PC-9 (cell line): ENCODE measurements at regions of chr21 and their contacts with region 1.

Region 1: GRCh38 chr21:35256467-35256988 is 207.4 kb upstream of the RUNX1 start:
- DNase-seq: peak; percentile 86 to 98
- H3K4me3 ChIP-seq: peak overlapping the region; percentile 42; the same call in 1 of the 2 replicates
- H3K27ac ChIP-seq: peak overlapping the region; percentile 99
- H3K4me1 ChIP-seq: peaks cover 37% of the 10 kb centered on the region
- H3K27me3 ChIP-seq: no peaks in the 10 kb centered on the region
- CTCF ChIP-seq: no peak

Region 2: DNA sequence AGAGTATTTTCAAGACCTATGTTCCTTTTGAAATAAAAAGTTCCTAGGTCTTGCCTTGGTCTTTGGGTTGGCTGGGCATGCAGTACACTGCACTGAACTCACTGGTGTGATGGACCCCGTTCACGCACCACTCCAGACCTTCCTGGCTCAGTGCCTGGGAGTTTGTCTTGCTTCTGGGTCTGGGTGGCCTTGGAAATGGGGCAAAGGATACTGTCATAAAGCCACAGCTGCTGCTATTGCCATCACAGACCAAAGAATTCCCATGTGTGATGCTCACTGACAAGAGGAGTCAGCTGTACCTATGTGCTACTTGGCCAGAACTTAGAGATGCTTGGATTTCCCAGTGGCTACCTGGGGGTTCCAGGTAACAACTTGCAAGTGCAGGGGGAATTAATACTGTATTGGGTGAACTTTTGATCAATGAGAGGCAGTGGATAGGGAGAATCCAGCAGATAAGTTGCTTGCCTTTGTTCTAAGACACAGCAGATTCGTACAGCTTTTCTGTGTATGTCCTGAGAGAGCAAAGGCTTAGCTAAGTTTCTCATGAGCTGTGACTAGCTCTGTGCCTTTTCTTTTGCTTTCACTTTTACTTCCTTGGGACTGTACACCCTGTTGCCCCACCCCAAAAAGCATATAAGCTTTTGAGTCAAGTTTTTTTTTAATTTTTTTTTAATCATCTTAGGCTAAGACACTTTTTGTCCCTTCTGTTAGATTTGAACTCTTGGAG is 322.8 kb before region 1 on chr21:
- CTCF ChIA-PET with region 1: no interaction called
- POLR2A ChIA-PET with region 1: no interaction called
- intact Hi-C with region 1: no loop called
- DNase-seq: no peak
- H3K4me3 ChIP-seq: no peak overlapping the region
- H3K27ac ChIP-seq: no peak overlapping the region
- H3K4me1 ChIP-seq: 0 out of 2 replicates have a peak, but pooled peaks cover 1% of the 10 kb centered on the region
- H3K27me3 ChIP-seq: no peaks in the 10 kb centered on the region
- CTCF ChIP-seq: no peak

Region 3: GRCh38 chr21:34967509-34968289 is 288.8 kb before region 1 on chr21:
- CTCF ChIA-PET with region 1: no interaction called
- POLR2A ChIA-PET with region 1: no interaction called
- intact Hi-C with region 1: loop called (anchors 10 kb)
- DNase-seq: peak; percentile 60 to 87
- H3K4me3 ChIP-seq: no peak overlapping the region
- H3K27ac ChIP-seq: peak overlapping the region; percentile 92
- H3K4me1 ChIP-seq: peaks cover 54% of the 10 kb centered on the region
- H3K27me3 ChIP-seq: no peaks in the 10 kb centered on the region
- CTCF ChIP-seq: no peak

Region 4: DNA sequence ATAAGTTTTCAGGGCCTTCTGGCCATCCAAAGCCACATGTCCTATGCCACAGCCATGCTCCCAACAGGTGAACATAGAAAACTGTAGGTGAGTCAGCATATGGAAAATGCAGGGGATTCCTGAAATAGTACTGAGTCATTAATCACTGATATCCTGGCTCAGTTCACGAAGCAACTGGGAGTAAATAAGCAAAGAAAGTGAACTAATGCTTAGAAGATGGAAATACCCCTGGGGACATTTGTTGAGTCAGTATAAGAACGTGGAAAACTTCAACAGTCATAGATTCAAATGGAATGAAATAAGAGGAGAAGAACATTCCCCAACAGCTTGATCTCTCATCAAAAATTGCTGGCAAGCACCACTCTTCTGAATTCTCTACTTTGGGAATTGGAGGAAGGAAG is 58.5 kb before region 1 on chr21:
- CTCF ChIA-PET with region 1: no interaction called
- POLR2A ChIA-PET with region 1: no interaction called
- intact Hi-C with region 1: loop called (anchors 10 kb)
- DNase-seq: peak; percentile 48 to 97
- H3K4me3 ChIP-seq: peak overlapping the region; percentile 22; the same call in 1 of the 2 replicates
- H3K27ac ChIP-seq: peak overlapping the region; percentile 100
- H3K4me1 ChIP-seq: peaks cover 48% of the 10 kb centered on the region
- H3K27me3 ChIP-seq: no peaks in the 10 kb centered on the region
- CTCF ChIP-seq: no peak

Region 5: DNA sequence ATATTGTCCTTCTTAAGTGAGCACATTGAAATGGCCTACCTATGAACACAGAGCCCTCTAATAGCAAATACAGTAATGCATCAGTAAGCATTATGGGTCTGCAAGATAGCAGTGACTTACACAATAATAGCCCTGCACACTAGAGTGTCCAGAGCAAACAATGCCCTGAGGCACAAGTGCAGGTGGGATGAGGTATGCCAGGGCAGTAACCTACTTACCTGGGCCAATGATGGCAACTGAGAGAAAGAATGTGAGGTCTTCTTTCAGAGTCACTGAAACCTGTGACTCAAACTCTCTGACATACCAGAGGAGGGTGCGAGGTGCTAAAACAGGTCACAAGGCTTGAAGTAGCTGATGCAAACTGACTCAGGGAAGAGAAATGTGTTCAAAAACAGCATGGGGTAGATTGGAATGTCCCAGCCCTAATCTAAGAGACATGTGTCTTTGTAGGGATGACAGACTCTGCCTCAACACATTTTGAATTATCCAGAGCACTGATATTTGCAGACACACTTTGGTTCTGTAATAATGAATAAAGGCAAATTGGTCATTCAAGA is 38.9 kb before region 1 on chr21:
- CTCF ChIA-PET with region 1: no interaction called
- POLR2A ChIA-PET with region 1: no interaction called
- intact Hi-C with region 1: loop called (anchors 1 kb)
- DNase-seq: peak; percentile 88 to 100
- H3K4me3 ChIP-seq: no peak overlapping the region
- H3K27ac ChIP-seq: peak overlapping the region; percentile 100
- H3K4me1 ChIP-seq: peaks cover 55% of the 10 kb centered on the region
- H3K27me3 ChIP-seq: no peaks in the 10 kb centered on the region
- CTCF ChIP-seq: no peak

Region 6: DNA sequence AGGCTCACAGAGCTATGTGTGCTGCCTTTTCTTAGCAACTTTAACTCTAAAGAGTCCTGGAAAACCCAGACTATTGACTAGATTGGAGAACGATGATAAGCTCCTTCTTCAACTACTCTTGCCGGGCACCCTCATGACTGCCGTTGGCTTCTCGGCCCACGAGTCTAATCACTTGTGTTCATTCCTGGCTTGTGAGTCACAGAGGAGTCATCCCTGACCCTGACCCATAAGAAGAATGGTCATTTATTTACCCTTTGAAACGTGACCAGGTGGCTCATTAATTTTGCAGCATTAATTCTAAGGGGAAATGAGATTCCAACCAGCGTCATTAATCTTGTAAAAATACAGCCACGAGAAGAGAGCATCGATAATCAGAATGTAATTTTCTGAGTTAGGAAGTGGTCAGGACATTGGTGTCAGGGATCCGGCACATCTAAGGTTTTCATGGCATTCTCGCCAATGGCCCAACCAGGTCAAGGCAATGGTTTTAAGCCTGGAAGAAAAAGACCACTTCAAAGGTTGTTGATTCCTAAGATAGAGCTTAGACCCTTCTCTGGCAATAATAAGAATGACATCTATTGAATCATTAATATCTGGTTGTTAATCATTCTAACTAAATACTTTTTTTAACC is 23.9 kb before region 1 on chr21:
- CTCF ChIA-PET with region 1: interaction called, 3 read pairs
- POLR2A ChIA-PET with region 1: interaction called, 3 read pairs
- intact Hi-C with region 1: loop called (anchors 1 kb)
- DNase-seq: peak; percentile 63 to 88
- H3K4me3 ChIP-seq: 0 out of 2 replicates have a peak overlapping the region, but pooled peaks have one; percentile 6
- H3K27ac ChIP-seq: peak overlapping the region; percentile 86
- H3K4me1 ChIP-seq: peaks cover 50% of the 10 kb centered on the region
- H3K27me3 ChIP-seq: no peaks in the 10 kb centered on the region
- CTCF ChIP-seq: no peak

Region 7: GRCh38 chr21:35400233-35400957 is 143.9 kb after region 1 on chr21:
- CTCF ChIA-PET with region 1: no interaction called
- POLR2A ChIA-PET with region 1: no interaction called
- intact Hi-C with region 1: loop called (anchors 2 kb)
- DNase-seq: peak; percentile 19 to 77
- H3K4me3 ChIP-seq: no peak overlapping the region
- H3K27ac ChIP-seq: peak overlapping the region; percentile 52
- H3K4me1 ChIP-seq: peaks cover 32% of the 10 kb centered on the region
- H3K27me3 ChIP-seq: no peaks in the 10 kb centered on the region
- CTCF ChIP-seq: peak; percentile 68